ENCODE measurements at regions of chr12 and their contacts with region 1.

Region 1: DNA sequence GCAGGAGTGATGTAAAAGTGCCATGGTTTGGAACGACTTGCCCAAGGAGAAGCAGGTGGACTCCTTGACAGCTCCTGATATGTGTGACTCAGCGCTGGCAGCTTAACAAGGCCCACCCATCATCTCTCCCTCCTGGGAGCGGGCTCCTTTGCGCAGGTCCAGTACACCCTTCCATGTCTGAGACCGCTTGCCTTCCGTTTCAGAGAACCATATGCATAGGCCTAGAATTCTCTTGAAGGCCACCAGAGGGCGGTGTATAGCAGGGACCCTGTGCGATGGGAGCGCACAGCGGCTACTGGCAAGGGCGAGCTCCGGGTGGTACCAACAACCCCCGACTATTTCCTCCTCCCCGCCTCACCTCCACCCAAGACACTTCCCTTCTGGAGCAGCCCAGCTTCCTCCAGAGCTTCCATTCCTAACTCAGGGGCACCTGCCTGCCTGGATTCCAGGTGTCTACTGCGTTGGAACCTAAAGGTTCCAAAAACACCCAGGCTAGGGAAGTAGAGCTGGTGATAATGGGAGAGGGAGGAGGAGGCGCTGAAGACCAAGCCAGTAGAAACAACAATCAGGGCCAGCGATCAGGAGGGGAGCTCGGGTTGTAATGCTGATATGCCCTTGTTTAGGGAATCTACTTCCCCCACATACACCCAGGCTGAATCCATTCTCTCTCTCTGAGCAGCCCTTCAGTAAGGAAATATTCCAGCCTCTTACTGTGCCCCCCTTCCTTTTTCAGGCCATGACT is 6.2 kb downstream of the DHH start:
- DNase-seq: peak; percentile 55 to 88 (median 80)
- H3K4me3 ChIP-seq: peak overlapping the region in 47 of 59 donors; percentile 5 to 55 (median 35)
- H3K27ac ChIP-seq: peak overlapping the region in 54 of 59 donors; percentile 27 to 94 (median 82)
- H3K27me3 ChIP-seq: peaks cover 0 to 43% (median 10%) of the 10 kb centered on the region in 45 donors
- CTCF ChIP-seq: peak; percentile 50 to 95 (median 92)

Region 2: GRCh38 chr12:49069507-49070346 is 18.6 kb before region 1 on chr12 and contains the start of gene RHEBL1:
- intact Hi-C with region 1: loop called in 1 of 2 experiments (anchors 2 kb)
- DNase-seq: peak; percentile 97 to 99 (median 99)
- H3K4me3 ChIP-seq: peak within 1 kb of the TSS; percentile 55 to 99 (median 83)
- H3K27ac ChIP-seq: peak within 1 kb of the TSS in 50 of 59 donors; percentile 9 to 91 (median 64)
- H3K27me3 ChIP-seq: no peaks in the 10 kb centered on the region
- CTCF ChIP-seq: peak in 43 of 56 donors; percentile 10 to 66 (median 40)
- total RNA-seq, gene RHEBL1: 0.55 to 10.5 (median 5.5) TPM

Region 3: DNA sequence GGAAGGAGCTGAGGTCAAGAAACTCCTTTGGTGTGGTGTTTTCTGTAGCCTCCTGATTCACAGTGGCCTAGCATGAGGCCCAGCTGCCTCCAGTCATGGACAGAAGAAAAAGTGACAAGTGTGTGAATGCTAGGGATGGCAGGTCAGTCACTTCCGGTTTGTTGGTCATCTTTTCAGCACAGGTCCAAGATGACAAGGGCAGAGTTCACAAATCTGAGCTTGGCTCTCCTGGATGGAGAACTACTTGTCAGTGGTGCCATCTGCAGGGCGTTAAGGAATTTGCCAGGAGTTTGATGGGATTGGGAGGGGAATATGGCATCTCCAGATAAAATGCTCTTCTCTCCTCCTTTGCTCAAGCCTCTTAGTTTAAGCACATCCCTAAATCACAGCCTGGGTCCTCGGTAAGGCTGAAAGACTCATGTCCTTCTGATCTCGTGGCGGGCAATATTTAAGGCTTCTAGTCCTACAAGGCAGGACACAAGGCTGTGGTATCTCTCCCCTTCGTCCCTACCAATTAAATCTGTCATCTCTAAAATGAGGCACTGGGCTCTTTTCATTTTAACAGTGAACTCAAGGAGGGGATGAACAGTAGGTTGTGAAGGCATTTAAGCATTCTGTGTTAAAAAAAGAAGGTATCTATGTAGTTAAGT is 32.8 kb after region 1 on chr12:
- intact Hi-C with region 1: loop called (anchors 2 to 5 kb)
- DNase-seq: peak in 7 of 10 donors; percentile 37 to 64 (median 62)
- H3K4me3 ChIP-seq: no peak overlapping the region
- H3K27ac ChIP-seq: peak overlapping the region in 1 of 59 donors; percentile 44
- H3K27me3 ChIP-seq: no peaks in the 10 kb centered on the region
- CTCF ChIP-seq: peak in 55 of 56 donors; percentile 37 to 80 (median 69)

Region 4: GRCh38 chr12:49232940-49233841 is 144.8 kb after region 1 on chr12:
- intact Hi-C with region 1: loop called (anchors 1 kb)
- DNase-seq: peak; percentile 49 to 88 (median 85)
- H3K4me3 ChIP-seq: peak overlapping the region; percentile 24 to 86 (median 68)
- H3K27ac ChIP-seq: peak overlapping the region; percentile 95 to 100 (median 99)
- H3K27me3 ChIP-seq: no peaks in the 10 kb centered on the region
- CTCF ChIP-seq: peak in 49 of 56 donors; percentile 6 to 63 (median 37)

Region 5: DNA sequence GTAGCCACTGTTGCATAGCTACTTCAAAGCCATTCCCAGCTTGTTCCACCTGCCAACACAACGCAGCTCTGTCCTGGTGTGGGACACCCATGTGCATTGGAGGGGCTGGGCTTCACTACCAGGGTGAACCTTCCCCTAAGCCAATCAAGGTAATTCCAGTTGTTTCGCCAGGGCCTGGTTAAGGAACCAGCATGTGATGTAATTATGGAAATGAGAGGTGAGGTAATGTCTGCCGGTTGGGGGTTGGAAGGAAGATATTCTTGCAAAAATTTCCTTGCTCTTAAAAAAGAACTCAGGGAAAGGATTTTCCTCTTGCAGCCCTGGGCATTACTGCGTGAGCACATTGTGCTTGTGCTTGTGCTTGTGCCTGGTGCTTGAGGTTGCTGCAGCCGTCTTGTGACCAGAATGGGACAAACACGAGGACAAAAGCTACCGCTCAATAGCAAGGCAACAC is 191.4 kb after region 1 on chr12:
- intact Hi-C with region 1: no loop called
- DNase-seq: peak in 1 of 10 donors; percentile 17
- H3K4me3 ChIP-seq: no peak overlapping the region
- H3K27ac ChIP-seq: peak overlapping the region in 14 of 59 donors; percentile 13 to 64 (median 36)
- H3K27me3 ChIP-seq: peaks cover 0 to 6% (median 0%) of the 10 kb centered on the region in 45 donors
- CTCF ChIP-seq: no peak

Measured in dorsolateral prefrontal cortex (tissue), 120 donors.